ENCODE measurements at regions of chr10 and their contacts with region 1.

Region 1: GRCh38 chr10:127715782-127716378 is 21.1 kb upstream of the FOXI2 start:
- DNase-seq: no peak
- ATAC-seq: no peak
- H3K4me3 Mint-ChIP-seq: no peak overlapping the region
- H3K27ac Mint-ChIP-seq: no peak overlapping the region
- H3K4me1 Mint-ChIP-seq: no peaks in the 10 kb centered on the region
- H3K27me3 Mint-ChIP-seq: no peaks in the 10 kb centered on the region

Region 2: DNA sequence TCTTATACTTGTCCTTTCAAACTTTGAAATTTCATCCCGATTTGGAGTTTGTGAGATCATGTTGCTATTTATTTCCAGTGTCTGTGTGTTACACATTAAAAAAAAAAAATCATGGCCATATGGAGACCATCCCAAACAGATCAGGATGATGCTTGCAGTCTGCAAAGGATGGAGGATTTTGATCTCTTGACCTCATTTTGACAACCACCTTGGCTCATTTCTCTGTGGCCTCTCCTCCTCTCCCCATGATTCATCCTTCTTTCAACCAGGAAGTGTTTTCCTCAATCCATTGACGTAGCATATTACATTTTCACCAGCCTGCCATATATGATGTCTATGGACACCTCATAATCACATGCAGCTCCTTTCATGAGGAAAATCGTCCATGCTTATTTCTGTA is 450.6 kb before region 1 on chr10:
- CTCF ChIA-PET with region 1: no interaction called
- DNase-seq: no peak
- ATAC-seq: no peak
- H3K4me3 Mint-ChIP-seq: no peak overlapping the region
- H3K27ac Mint-ChIP-seq: no peak overlapping the region
- H3K4me1 Mint-ChIP-seq: no peaks in the 10 kb centered on the region
- H3K27me3 Mint-ChIP-seq: no peaks in the 10 kb centered on the region

Region 3: GRCh38 chr10:127853868-127854768 is 138.2 kb after region 1 on chr10:
- CTCF ChIA-PET with region 1: interaction called, 18 read pairs
- DNase-seq: peak; percentile 51
- ATAC-seq: peak; percentile 81
- H3K4me3 Mint-ChIP-seq: no peak overlapping the region
- H3K27ac Mint-ChIP-seq: no peak overlapping the region
- H3K4me1 Mint-ChIP-seq: no peaks in the 10 kb centered on the region
- H3K27me3 Mint-ChIP-seq: no peaks in the 10 kb centered on the region

Measured in activated CD8-positive, alpha-beta memory T cell treated with anti-CD3 and anti-CD28 coated beads, Interleukin-2, amount 10 ng/mL, durations not matched to agents 7 days and 5 days (primary cell).